Caco-2 (cell line): ENCODE measurements at regions of chr7 and their contacts with region 1.

Region 1: GRCh38 chr7:100428199-100428966 is at the start of gene ZCWPW1:
- DNase-seq: peak; percentile 96 to 97
- H3K4me3 ChIP-seq: peak within 1 kb of the TSS; percentile 88
- H3K4me3 Mint-ChIP-seq: peak within 1 kb of the TSS; percentile 89
- H3K27ac Mint-ChIP-seq: peak within 1 kb of the TSS; percentile 99
- H3K4me1 ChIP-seq: 0 out of 2 replicates have a peak, but pooled peaks cover 10% of the 10 kb centered on the region
- H3K4me1 Mint-ChIP-seq: peaks cover 7% of the 10 kb centered on the region
- H3K27me3 ChIP-seq: no peaks in the 10 kb centered on the region
- H3K27me3 Mint-ChIP-seq: peaks cover 4% of the 10 kb centered on the region
- CTCF ChIP-seq: no peak
- total RNA-seq, gene ZCWPW1: 3.4 and 4.4 TPM in 2 replicates

Region 2: DNA sequence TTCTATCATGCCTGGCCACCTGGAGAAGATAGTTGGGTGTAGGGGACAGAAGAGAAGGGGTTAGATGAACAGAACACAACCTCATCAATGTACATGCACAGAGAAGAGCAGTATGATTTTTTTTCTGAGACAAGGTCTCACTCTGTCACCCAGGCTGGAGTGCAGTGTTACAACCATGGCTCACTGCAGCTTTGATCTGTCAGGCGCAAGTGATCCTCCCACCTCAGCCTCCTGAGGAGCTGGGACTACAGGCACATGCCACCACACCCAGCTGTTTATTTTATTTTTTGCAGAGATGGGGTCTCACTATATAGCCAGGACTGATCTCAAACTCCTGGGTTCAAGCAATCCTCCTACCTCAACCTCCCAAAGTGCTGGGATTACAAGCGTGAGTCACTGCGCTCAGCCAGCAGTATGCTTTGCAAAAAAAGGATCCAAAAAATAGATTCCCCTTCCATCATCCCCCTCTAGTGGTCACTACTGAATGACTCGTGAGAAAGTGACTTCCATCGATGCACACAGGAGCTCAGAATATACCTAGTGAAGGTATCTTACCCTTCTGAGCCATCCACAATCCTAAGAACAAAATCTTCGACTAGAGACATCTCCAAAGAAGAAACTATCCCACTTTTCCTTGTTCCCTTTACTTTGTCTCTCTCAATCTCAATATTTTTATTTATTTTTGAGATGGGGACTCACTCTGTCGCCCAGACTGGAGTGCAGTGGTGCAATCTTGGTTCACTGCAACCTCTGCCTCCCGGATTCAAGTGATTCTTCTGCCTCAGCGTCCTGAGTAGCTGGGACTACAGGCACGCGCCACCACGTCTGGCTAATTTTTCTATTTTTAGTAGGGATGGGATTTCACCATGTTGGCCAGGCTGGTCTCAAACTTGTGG is 20.9 kb before region 1 on chr7:
- CTCF ChIA-PET with region 1: interaction called, 13 read pairs
- POLR2A ChIA-PET with region 1: interaction called, 3 read pairs
- intact Hi-C with region 1: no loop called
- DNase-seq: peak; percentile 41 to 71
- H3K4me3 ChIP-seq: no peak overlapping the region
- H3K4me3 Mint-ChIP-seq: no peak overlapping the region
- H3K27ac Mint-ChIP-seq: no peak overlapping the region
- H3K4me1 ChIP-seq: no peaks in the 10 kb centered on the region
- H3K4me1 Mint-ChIP-seq: no peaks in the 10 kb centered on the region
- H3K27me3 ChIP-seq: 0 out of 2 replicates have a peak, but pooled peaks cover 1% of the 10 kb centered on the region
- H3K27me3 Mint-ChIP-seq: peaks cover 3% of the 10 kb centered on the region
- CTCF ChIP-seq: peak; percentile 56 to 74

Region 3: GRCh38 chr7:100538654-100539435 is 110.5 kb after region 1 on chr7 and contains the start of gene AGFG2:
- CTCF ChIA-PET with region 1: no interaction called
- POLR2A ChIA-PET with region 1: interaction called, 17 read pairs
- intact Hi-C with region 1: loop called (anchors 2 kb)
- DNase-seq: peak; percentile 100
- H3K4me3 ChIP-seq: peak within 1 kb of the TSS; percentile 89
- H3K4me3 Mint-ChIP-seq: peak within 1 kb of the TSS; percentile 87
- H3K27ac Mint-ChIP-seq: peak within 1 kb of the TSS; percentile 72
- H3K4me1 ChIP-seq: peaks cover 37% of the 10 kb centered on the region
- H3K4me1 Mint-ChIP-seq: peaks cover 22% of the 10 kb centered on the region
- H3K27me3 ChIP-seq: no peaks in the 10 kb centered on the region
- H3K27me3 Mint-ChIP-seq: no peaks in the 10 kb centered on the region
- CTCF ChIP-seq: no peak
- total RNA-seq, gene AGFG2: 58.5 and 60.7 TPM in 2 replicates

Region 4: GRCh38 chr7:100691676-100692577 is 263.5 kb after region 1 on chr7:
- CTCF ChIA-PET with region 1: interaction called, 10 read pairs
- POLR2A ChIA-PET with region 1: no interaction called
- intact Hi-C with region 1: no loop called
- DNase-seq: peak in 1 of 2 experiments; percentile 77
- H3K4me3 ChIP-seq: peak overlapping the region; percentile 55
- H3K4me3 Mint-ChIP-seq: peak overlapping the region; percentile 96
- H3K27ac Mint-ChIP-seq: no peak overlapping the region
- H3K4me1 ChIP-seq: peaks cover 19% of the 10 kb centered on the region
- H3K4me1 Mint-ChIP-seq: peaks cover 18% of the 10 kb centered on the region
- H3K27me3 ChIP-seq: no peaks in the 10 kb centered on the region
- H3K27me3 Mint-ChIP-seq: no peaks in the 10 kb centered on the region
- CTCF ChIP-seq: peak; percentile 68 to 77